Breast epithelium (tissue), 4 donors: ENCODE measurements at regions of chr10 and their contacts with region 1.

Region 1: DNA sequence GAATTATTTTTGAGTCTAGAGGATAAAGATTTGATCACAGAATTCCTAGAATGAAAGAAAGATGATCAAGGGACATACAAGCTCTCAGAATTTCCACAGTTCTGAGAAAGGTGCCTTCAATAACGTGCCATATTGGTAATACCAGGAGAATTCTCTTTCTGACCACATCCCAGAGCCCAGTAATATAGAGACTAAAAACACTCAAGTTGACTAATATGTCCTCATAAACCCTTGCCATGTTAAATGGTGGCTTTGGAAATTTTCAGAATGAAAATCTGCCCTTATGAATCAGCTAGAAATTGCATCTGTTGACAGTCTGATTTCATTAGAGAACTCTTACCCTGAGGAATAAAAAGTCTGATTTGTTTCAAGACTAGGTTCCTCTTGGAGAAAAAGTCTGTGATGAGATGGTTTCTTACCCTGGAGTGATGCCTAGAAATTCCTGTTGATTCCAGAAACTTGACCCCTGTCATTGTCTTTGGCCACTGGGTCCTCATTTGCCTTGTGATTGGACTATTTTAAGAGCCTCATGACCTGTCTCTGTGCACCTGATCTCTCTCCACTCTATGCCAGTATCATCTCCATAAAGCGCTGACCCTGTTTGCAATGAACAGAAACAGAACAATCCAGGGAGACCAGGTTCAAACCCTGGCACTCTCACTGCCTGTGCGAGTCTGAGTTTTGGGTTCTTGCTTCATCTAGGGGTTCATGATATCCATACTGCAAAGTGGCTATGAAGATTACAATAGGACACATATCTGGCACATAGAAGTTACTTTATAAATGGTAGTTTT is 3.3 kb downstream of the IL2RA start:
- DNase-seq: no peak
- H3K4me3 ChIP-seq: no peak overlapping the region
- H3K27ac ChIP-seq: no peak overlapping the region
- H3K4me1 ChIP-seq: no peaks in the 10 kb centered on the region
- H3K27me3 ChIP-seq: no peaks in the 10 kb centered on the region
- CTCF ChIP-seq: no peak
- POLR2A ChIP-seq: no peak

Region 2: DNA sequence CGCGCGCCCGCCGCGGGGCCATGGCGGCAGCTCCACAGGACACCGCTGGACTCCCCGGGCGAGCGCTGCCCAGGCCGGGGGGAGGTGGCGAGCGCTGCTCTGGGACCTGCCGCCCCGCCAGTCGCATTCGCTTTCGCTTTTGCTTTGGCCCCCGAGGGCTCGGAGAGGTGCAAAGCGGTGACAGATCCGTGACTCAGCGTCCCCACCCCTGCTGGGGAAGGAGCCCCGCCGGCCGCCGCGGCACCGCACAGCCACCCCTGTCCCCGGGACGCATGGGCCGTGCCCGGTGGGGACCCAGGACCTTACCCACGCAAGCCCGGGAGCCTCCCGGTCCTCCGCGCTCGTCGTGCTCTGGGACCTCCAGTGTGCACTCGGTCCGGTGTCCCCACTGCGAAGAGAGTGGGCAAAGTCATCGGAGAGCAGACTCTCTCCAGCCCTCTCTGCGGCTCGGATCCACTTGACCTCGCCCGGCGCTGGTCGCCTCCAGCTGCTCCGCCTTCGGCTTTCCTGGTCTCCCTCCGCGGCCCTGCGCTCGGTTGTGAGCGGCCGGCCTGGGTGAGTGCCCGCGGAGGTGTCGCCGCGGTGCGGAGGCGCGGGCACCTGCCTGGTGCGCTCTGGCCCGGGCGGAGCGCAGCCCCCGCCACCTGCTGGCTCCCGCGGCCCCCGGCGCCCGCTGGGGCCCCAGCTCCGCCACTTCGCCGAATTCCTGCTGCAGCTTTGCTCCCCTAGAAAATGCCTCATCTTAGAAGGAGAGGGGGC is 81.2 kb before region 1 on chr10 and contains the start of gene IL15RA:
- intact Hi-C with region 1: no loop called
- DNase-seq: peak; percentile 66 to 69
- H3K4me3 ChIP-seq: peak within 1 kb of the TSS; percentile 69 to 95 (median 88)
- H3K27ac ChIP-seq: peak within 1 kb of the TSS; percentile 97 to 98
- H3K4me1 ChIP-seq: no peaks in the 10 kb centered on the region
- H3K27me3 ChIP-seq: no peaks in the 10 kb centered on the region
- CTCF ChIP-seq: no peak
- POLR2A ChIP-seq: no peak
- total RNA-seq, gene IL15RA: 15.1 to 35.7 (median 25.9) TPM

Region 3: GRCh38 chr10:7389844-7390243 is 1331.0 kb after region 1 on chr10:
- intact Hi-C with region 1: loop called (anchors 5 kb)
- DNase-seq: no peak
- H3K4me3 ChIP-seq: no peak overlapping the region
- H3K27ac ChIP-seq: no peak overlapping the region
- H3K4me1 ChIP-seq: no peaks in the 10 kb centered on the region
- H3K27me3 ChIP-seq: no peaks in the 10 kb centered on the region
- CTCF ChIP-seq: no peak
- POLR2A ChIP-seq: no peak